Mucosa of descending colon (tissue), 3 donors: ENCODE measurements at regions of chr12 and their contacts with region 1.

Region 1: GRCh38 chr12:89461649-89462612 is 62.7 kb downstream of the GALNT4 start:
- DNase-seq: no peak
- ATAC-seq: peak; percentile 94
- H3K4me3 ChIP-seq: no peak overlapping the region
- H3K4me1 ChIP-seq: peaks cover 14% of the 10 kb centered on the region
- CTCF ChIP-seq: no peak

Region 2: GRCh38 chr12:89306827-89307473 is 155.0 kb before region 1 on chr12:
- intact Hi-C with region 1: no loop called
- DNase-seq: no peak
- ATAC-seq: no peak
- H3K4me3 ChIP-seq: no peak overlapping the region
- H3K4me1 ChIP-seq: no peaks in the 10 kb centered on the region
- CTCF ChIP-seq: no peak

Region 3: DNA sequence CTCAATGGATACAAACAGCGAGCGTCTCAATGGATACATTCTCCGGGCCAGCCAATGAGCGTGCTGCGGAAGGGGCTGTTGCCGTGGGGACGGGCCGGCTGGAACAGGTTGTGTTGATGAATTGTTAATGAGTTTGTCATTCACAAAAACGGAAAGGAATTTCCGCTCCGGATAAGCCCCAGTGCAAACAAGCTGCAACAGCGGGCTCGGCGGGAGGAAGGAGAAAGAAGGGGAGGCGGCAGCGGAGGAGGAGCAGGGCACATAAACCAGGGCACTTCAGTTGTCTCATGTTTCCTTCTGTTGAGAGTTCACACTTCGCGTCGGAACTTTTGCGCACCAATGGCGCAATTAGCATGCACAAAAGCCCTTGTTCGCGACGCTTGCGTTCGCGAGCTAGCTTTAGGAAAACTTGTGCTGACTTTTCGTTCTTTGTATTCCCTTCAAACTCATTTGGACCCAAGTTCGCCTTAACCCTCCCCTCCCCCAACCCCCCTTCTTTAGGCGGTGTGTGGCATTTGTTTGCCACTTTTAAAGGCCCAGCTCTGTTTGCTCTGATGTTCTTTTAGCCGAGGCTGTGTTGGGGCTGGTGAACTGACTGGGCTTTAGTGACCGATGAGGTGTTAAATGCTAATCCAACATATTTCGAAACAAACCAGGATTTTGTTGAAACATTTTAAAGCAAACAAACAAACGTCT is 109.3 kb before region 1 on chr12 and contains the start of gene DUSP6:
- intact Hi-C with region 1: loop called in 1 of 2 experiments (anchors 5 kb)
- DNase-seq: peak; percentile 95 to 98 (median 96)
- ATAC-seq: peak; percentile 70
- H3K4me3 ChIP-seq: peak within 1 kb of the TSS; percentile 84
- H3K4me1 ChIP-seq: peaks cover 36% of the 10 kb centered on the region
- CTCF ChIP-seq: no peak
- total RNA-seq, gene DUSP6: 56.6 to 82.1 (median 65.0) TPM